ENCODE measurements at regions of chr4 and their contacts with region 1.

Region 1: DNA sequence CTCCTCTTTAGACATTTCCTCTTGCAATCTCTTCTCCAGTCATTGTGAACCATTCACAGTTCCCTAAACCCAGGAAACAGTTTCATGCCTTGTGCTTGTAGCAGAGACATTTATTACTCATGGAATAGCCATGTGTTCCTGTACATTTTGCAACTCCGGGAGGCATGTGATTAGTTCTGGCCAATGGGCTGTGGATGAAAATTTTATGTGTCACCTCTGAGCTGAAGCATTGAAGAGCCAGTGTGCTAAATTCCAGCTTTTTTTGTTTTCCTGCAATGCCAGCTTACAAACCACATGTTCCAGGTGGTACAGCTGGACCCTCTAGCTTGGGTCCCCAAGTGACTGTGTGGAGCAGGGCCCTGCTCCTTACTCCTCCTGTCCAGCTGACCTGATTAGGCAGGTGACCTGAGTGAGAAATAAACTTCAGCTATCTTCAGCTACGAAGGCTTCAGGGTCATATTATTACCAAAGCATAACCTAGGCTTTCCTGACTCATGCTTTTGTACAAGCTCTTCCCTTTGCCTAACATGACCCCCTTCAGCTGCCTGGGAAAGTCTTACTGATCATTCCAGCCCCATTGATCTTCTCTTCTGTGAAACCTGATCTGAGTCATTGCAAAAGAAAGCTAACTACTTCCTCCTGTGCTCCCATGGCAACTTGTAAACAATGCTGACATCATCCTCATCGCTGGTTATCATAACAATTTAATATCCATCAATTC is 200.4 kb downstream of the PTTG2 start:
- DNase-seq: no peak
- ATAC-seq: peak; percentile 54
- H3K4me3 ChIP-seq: no peak overlapping the region
- H3K27ac ChIP-seq: peak overlapping the region; percentile 17 to 82
- H3K4me1 ChIP-seq: peaks cover 10 to 49% of the 10 kb centered on the region in 2 donors
- H3K27me3 ChIP-seq: no peaks in the 10 kb centered on the region
- CTCF ChIP-seq: no peak

Region 2: GRCh38 chr4:38062088-38062893 is 98.4 kb before region 1 on chr4:
- intact Hi-C with region 1: loop called in 1 of 2 experiments (anchors 10 kb)
- DNase-seq: peak in 3 of 4 donors; percentile 70 to 89 (median 74)
- ATAC-seq: peak; percentile 93
- H3K4me3 ChIP-seq: peak overlapping the region; percentile 8 to 24
- H3K27ac ChIP-seq: peak overlapping the region in 1 of 2 donors; percentile 53
- H3K4me1 ChIP-seq: peaks cover 0 to 16% of the 10 kb centered on the region in 2 donors
- H3K27me3 ChIP-seq: no peaks in the 10 kb centered on the region
- CTCF ChIP-seq: peak; percentile 76 to 79

Measured in left lung (tissue), 14 donors.